ENCODE measurements at regions of chr17 and their contacts with region 1.

Region 1: GRCh38 chr17:65231662-65232335 is 94.6 kb downstream of the RGS9 start:
- DNase-seq: peak; percentile 72
- H3K4me3 ChIP-seq: no peak overlapping the region
- H3K27ac ChIP-seq: no peak overlapping the region
- H3K4me1 ChIP-seq: peaks cover 13% of the 10 kb centered on the region
- H3K27me3 ChIP-seq: peaks cover 8 to 10% of the 10 kb centered on the region in 2 experiments
- CTCF ChIP-seq: peak; percentile 80 to 82
- POLR2A ChIP-seq: no peak

Region 2: GRCh38 chr17:65143889-65144604 is 87.8 kb before region 1 on chr17:
- CTCF ChIA-PET with region 1: no interaction called
- POLR2A ChIA-PET with region 1: no interaction called
- dilution Hi-C with region 1: no loop called
- intact Hi-C with region 1: no loop called
- DNase-seq: no peak
- H3K4me3 ChIP-seq: no peak overlapping the region
- H3K27ac ChIP-seq: no peak overlapping the region
- H3K4me1 ChIP-seq: no peaks in the 10 kb centered on the region
- H3K27me3 ChIP-seq: peaks cover 5 to 16% of the 10 kb centered on the region in 2 experiments
- CTCF ChIP-seq: no peak
- POLR2A ChIP-seq: no peak

Region 3: GRCh38 chr17:65219124-65219523 is 12.7 kb before region 1 on chr17:
- CTCF ChIA-PET with region 1: interaction called, 12 read pairs
- POLR2A ChIA-PET with region 1: interaction called, 4 read pairs
- dilution Hi-C with region 1: no loop called
- intact Hi-C with region 1: no loop called
- DNase-seq: no peak
- H3K4me3 ChIP-seq: no peak overlapping the region
- H3K27ac ChIP-seq: no peak overlapping the region
- H3K4me1 ChIP-seq: no peaks in the 10 kb centered on the region
- H3K27me3 ChIP-seq: peaks cover 37 to 41% of the 10 kb centered on the region in 2 experiments
- CTCF ChIP-seq: peak in 1 of 2 donors; percentile 21
- POLR2A ChIP-seq: no peak

Region 4: DNA sequence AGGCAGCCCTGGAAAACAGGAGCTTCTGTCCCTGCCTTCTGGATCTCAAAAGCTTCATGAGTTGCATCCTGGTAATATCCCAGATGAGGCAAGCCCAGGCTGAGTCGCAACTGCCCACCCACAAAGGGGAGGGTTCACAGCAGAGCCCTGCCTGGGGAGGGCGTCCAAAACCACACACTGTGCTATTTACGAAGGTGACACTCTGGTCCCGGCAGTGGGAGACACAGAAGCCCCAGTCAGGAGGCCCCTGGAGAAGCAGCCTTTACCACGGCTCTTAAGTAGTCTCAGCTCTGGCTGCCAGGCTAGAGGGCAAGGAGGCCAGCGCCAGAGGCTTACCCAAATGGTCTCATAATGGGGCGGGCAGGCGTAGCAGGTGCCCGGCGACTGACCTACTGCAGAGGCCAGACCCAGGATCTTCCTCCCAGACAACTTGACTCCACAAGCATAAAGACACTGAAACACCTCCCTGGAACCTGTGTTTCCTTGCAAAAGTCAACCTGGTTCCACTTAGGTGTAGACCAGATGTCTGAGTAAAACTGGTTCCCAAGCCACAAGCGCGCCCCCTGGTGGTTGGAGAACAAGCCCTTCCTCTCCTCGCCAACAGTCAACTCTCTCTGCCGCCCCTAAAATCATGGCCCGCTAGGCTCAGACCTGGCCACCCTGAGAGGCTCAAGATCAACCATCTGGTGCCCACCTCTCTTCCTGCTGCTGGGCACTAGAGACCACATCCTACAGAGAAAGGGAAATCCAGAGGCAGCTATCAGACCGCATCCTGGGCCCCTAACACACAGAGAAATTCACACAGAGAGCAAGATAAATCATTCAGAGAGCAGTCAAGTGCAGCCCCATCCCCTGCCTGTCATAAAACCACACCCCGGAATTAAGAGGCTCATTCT is 324.5 kb after region 1 on chr17:
- CTCF ChIA-PET with region 1: interaction called, 67 read pairs
- POLR2A ChIA-PET with region 1: no interaction called
- dilution Hi-C with region 1: no loop called
- intact Hi-C with region 1: loop called (anchors 1 kb)
- DNase-seq: peak; percentile 21
- H3K4me3 ChIP-seq: no peak overlapping the region
- H3K27ac ChIP-seq: no peak overlapping the region
- H3K4me1 ChIP-seq: peaks cover 5% of the 10 kb centered on the region
- H3K27me3 ChIP-seq: peaks cover 4 to 5% of the 10 kb centered on the region in 2 experiments
- CTCF ChIP-seq: peak; percentile 76 to 79
- POLR2A ChIP-seq: no peak

Region 5: DNA sequence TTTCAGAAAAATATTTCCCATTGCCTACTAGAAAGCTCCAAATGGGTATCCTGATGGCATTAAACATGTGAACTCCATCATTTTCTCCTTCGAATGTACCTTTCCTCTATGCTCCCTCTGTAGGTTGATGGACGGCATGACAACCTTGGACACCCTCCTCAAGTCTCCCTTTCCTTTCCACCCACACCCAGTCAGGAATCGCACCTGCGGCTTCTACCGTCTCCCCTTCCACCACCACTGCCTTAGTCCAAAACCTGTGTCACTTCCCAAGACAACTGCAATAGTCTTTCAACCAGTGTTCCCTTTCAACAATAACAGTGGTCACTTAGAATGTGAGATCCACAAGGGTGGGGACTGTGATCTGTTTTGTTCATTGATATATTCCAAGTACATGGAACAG is 562.8 kb after region 1 on chr17:
- CTCF ChIA-PET with region 1: interaction called, 16 read pairs
- POLR2A ChIA-PET with region 1: no interaction called
- dilution Hi-C with region 1: no loop called
- intact Hi-C with region 1: loop called (anchors 1 kb)
- DNase-seq: peak; percentile 35
- H3K4me3 ChIP-seq: no peak overlapping the region
- H3K27ac ChIP-seq: no peak overlapping the region
- H3K4me1 ChIP-seq: peaks cover 3% of the 10 kb centered on the region
- H3K27me3 ChIP-seq: no peaks in the 10 kb centered on the region
- CTCF ChIP-seq: peak; percentile 31 to 56
- POLR2A ChIP-seq: no peak

Region 6: DNA sequence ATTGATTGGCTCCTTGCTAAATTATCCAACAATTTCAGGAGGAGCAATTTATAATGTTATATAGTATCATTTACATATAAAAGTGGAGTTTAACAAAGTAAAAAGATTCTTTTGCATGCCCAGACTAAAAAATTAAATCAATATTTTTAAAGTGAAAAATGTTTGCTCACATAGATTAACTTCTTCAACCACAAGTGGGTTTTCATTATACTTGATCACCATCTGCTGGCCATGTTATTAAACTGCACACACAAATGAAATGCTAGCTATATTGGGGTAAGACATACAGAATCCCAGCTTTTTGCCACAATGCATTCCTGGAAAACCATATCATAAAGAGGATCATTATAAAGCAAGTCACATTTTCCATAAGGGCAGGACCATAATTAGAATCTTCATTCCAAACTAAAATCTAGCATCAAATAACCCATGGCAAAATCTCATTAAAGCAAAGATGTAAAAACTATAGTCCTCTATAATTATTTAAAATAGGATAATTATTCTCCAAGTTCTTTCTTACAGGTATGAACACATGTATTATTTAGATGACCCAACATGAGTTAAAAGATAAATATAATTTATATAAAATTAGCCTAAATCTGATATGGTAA is 933.8 kb after region 1 on chr17:
- CTCF ChIA-PET with region 1: interaction called, 108 read pairs
- POLR2A ChIA-PET with region 1: no interaction called
- dilution Hi-C with region 1: no loop called
- intact Hi-C with region 1: loop called (anchors 1 kb)
- DNase-seq: peak; percentile 72
- H3K4me3 ChIP-seq: no peak overlapping the region
- H3K27ac ChIP-seq: no peak overlapping the region
- H3K4me1 ChIP-seq: no peaks in the 10 kb centered on the region
- H3K27me3 ChIP-seq: no peaks in the 10 kb centered on the region
- CTCF ChIP-seq: peak; percentile 33 to 45
- POLR2A ChIP-seq: no peak

Measured in endothelial cell of umbilical vein (primary cell).